Activated T-helper 1 cell treated with anti-CD3 and anti-CD28 coated beads, Interleukin-12 subunit alpha, Interleukin-12 subunit beta, Interleukin-2, Interleukin-4 antibody, amounts not matched to agents 30 ng/mL and 10 ng/mL and 1 ng/mL, durations not matched to agents 14 hours and 24 hours and 36 hours (primary cell): ENCODE measurements at regions of chr1 and their contacts with region 1.

Region 1: DNA sequence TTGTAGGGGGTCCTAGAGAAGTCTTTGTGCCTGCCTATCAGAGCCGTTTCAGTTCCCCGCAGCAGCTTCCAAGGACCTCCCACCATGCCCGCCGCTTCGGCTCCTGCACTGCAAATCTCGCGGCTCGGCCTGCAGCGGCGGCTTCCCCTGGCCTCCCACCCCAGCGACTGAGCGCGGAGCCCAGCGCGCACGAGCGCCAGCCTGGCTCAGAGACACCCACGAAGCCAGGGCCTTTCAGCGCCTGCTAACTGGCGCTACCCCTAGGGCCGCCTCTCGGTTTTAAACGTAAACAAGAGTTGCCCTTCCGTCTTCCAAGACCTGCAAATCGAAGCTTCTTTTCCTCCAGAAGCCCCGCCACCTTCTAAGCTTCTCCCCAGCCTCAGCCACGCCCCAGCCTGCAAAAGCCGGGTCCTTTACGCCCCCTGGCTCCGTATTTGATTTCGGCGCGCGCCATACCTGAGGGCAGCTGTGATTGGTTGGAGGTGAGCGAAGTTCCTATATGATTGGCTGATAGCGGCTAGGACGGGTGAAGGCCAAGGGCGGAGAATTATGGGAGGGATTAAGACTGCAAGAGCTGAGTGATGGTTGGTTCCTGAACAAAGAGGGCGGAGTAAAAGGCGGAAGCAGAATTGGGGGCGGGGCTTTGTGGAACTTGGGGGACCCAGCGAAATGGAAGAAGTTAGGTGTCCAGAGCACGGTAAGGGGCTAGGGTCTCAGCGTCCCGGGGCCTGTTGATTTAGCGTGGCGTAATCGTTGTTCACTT is at the start of gene TTF2:
- DNase-seq: peak; percentile 97
- H3K4me3 Mint-ChIP-seq: no peak within 1 kb of the TSS
- H3K27ac Mint-ChIP-seq: no peak within 1 kb of the TSS
- H3K4me1 Mint-ChIP-seq: peaks cover 46% of the 10 kb centered on the region
- H3K27me3 Mint-ChIP-seq: no peaks in the 10 kb centered on the region
- total RNA-seq, gene TTF2: 103 and 114 TPM in 2 replicates

Region 2: GRCh38 chr1:116372587-116373444 is 687.0 kb before region 1 on chr1 and contains the start of gene ATP1A1:
- intact Hi-C with region 1: loop called (anchors 1 kb)
- DNase-seq: peak; percentile 95
- H3K4me3 Mint-ChIP-seq: peak within 1 kb of the TSS; percentile 95
- H3K27ac Mint-ChIP-seq: peak within 1 kb of the TSS; percentile 90
- H3K4me1 Mint-ChIP-seq: peaks cover 38% of the 10 kb centered on the region
- H3K27me3 Mint-ChIP-seq: peaks cover 12% of the 10 kb centered on the region
- total RNA-seq, gene ATP1A1: 238 and 240 TPM in 2 replicates

Region 3: DNA sequence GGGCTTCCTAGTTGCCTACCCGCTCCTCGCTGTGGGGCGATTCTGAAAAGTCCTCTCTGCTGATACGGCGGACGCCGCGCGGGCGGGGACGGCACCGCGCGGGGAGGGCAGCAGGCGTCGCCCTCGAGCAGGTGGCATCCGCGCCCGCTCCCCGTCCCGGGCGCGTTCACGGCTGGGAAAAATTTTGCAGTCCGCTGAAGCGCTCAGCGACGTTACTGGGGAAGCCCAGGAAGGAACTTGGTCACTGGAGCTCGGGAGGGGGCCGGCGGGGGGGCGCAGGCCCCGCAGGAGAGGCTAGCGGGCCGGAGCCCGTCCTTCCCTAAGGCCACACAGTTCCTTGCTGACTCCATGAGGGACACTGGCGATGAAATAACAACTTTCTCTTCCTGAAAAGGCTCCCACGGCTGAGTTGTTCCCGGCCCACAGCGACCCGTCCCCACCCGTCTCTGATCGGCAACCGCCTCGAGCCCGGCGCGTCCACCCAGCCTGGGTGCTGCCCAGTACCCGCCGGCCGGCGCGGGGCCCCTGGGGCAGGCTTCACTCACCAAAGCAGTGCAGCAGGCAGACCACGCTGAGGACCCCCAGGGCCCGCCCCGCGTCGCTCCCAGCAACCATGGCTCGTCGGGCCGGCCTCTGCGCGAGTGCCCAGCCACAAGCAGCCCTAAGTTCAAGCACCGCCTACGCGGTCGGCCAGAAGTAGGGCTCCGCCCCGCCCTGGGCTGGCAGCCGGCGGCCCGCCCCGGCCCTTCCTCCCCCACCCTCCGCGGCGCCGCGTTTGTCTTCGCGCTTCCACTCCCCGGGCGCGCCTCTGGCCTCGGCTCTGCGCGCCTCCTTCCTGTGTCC is 489.3 kb before region 1 on chr1 and contains the start of gene CD58:
- intact Hi-C with region 1: loop called (anchors 1 kb)
- DNase-seq: peak; percentile 81
- H3K4me3 Mint-ChIP-seq: peak within 1 kb of the TSS; percentile 90
- H3K27ac Mint-ChIP-seq: peak within 1 kb of the TSS; percentile 90
- H3K4me1 Mint-ChIP-seq: peaks cover 74% of the 10 kb centered on the region
- H3K27me3 Mint-ChIP-seq: no peaks in the 10 kb centered on the region
- total RNA-seq, gene CD58: 35.3 and 37.8 TPM in 2 replicates

Region 4: GRCh38 chr1:116763787-116764465 is 295.9 kb before region 1 on chr1:
- intact Hi-C with region 1: loop called (anchors 1 kb)
- DNase-seq: peak; percentile 50
- H3K4me3 Mint-ChIP-seq: peak overlapping the region; percentile 84
- H3K27ac Mint-ChIP-seq: peak overlapping the region; percentile 100
- H3K4me1 Mint-ChIP-seq: peaks cover 95% of the 10 kb centered on the region
- H3K27me3 Mint-ChIP-seq: peaks cover 3% of the 10 kb centered on the region

Region 5: GRCh38 chr1:116847688-116848531 is 211.9 kb before region 1 on chr1:
- intact Hi-C with region 1: no loop called
- DNase-seq: no peak
- H3K4me3 Mint-ChIP-seq: no peak overlapping the region
- H3K27ac Mint-ChIP-seq: peak overlapping the region; percentile 38
- H3K4me1 Mint-ChIP-seq: peaks cover 34% of the 10 kb centered on the region
- H3K27me3 Mint-ChIP-seq: no peaks in the 10 kb centered on the region

Region 6: GRCh38 chr1:116899529-116899928 is 160.3 kb before region 1 on chr1:
- intact Hi-C with region 1: no loop called
- DNase-seq: no peak
- H3K4me3 Mint-ChIP-seq: no peak overlapping the region
- H3K27ac Mint-ChIP-seq: no peak overlapping the region
- H3K4me1 Mint-ChIP-seq: no peaks in the 10 kb centered on the region
- H3K27me3 Mint-ChIP-seq: peaks cover 2% of the 10 kb centered on the region

Region 7: DNA sequence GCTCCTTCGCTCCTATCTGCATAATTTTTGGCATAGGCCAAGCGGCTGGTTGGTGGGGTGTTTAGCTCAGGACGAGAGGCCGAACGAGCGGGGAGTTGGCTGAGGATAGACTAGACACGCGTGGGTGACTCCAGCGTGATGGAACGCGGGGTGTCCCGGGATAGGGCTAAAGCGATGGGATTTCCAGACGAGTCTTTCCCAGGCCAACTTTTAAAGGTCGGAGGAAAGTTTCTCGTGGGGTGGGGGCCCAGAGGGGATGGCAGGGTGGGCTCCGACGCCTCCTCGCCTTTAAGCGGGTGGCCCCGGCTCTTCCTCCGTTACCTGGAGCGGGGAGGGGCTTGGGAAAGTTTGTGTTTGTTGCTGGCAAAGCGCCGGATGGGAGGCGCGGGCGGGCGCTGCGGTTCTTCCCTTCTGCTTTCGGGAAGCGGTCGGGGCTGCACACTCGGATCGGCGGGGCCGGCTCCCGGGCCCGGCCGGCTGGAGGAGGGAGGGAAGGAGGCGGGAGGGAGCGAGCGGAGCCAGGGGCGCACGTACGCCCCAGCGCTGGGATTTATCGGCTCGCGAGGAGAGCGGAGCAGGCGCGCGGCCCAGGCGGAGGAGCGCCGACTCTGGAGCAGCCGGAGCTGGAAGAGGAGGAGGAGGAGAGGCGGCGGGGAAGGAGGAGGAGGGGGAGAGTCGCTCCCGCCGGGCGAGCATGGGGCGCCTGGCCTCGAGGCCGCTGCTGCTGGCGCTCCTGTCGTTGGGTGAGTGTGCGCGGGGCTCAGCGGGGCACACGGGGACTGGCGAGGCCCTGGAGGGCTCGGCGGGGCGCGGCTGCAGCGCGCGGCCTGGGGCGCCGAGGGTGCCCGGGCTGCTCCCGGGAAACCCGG is 150.1 kb before region 1 on chr1 and contains the start of gene PTGFRN:
- intact Hi-C with region 1: loop called (anchors 2 kb)
- DNase-seq: no peak
- H3K4me3 Mint-ChIP-seq: peak within 1 kb of the TSS; percentile 87
- H3K27ac Mint-ChIP-seq: peak within 1 kb of the TSS; percentile 75
- H3K4me1 Mint-ChIP-seq: peaks cover 9% of the 10 kb centered on the region
- H3K27me3 Mint-ChIP-seq: peaks cover 4% of the 10 kb centered on the region
- total RNA-seq, gene PTGFRN: 38.0 and 43.4 TPM in 2 replicates

Region 8: DNA sequence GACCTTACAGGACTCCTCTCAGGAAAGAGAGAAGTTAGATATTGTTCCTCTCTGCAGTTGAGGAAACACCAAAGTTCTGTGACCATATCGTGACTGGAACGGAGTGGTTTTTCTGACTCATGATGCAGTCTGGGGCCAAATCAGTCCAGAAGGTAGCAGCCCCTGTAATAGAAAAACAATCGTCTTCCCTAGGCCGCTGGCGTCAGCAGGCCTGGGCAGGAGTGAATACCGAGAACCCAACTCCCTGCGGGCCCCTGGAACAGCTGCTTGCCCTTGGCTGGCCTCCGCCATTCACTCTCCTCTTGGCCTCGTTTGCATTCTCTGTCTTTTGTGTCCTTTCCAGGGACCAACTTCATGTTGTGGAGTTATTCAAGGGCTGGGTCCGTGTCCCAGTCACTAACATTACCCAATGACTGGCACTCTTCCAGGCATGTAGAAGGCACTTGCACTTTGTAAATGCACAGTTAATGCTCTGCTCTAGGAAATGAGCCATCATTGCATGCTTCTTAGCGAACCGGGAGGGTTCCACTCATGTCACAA is 69.2 kb before region 1 on chr1:
- intact Hi-C with region 1: no loop called
- DNase-seq: no peak
- H3K4me3 Mint-ChIP-seq: no peak overlapping the region
- H3K27ac Mint-ChIP-seq: no peak overlapping the region
- H3K4me1 Mint-ChIP-seq: peaks cover 35% of the 10 kb centered on the region
- H3K27me3 Mint-ChIP-seq: peaks cover 5% of the 10 kb centered on the region

Region 9: DNA sequence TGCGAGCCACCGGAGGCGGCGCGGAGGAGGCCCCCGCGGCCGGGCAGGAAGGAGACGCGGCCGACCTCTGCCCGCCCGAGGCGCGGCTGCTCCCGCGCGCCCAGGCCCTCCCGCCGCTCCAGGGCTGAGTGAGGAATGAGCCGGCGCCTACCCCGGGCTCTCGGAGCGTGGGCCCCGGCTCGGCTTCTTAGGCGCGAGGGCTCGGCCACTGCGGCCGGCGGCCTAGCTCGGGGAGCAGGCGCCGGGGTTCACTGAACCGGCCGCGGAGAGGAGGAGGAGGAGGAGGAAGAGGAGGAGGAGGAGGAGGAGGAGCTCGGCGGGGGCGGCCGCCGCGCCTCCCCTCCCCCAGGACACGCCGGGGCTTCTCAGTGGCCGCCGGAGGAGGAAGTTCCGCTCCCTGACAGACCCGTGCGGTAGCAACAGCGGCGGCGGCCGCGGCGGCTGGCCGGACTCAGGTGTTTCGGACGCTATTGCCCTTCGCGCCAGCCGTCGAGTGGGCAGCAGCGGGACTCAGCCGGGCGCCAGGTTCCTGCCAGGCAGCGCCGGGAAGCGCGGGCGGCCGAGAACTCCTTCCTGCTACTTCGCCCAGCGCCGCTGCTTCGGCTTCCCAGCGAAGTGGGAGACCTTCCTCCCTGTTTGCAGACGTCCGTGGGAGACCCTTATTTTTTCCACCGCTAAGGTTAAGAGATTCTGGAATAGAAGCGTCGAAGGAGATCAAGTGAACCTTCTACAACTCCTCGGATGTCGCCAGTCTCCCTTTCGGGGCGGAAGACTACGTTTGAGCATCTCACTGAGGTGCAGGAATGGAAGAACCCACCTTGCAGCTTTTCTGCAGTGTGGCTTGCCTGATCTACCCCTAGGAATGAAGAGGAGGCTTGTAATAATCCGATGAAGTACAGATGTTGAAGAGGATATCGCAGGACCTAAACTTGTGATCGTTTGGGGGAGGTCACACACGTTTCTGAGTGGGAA is 307.5 kb after region 1 on chr1 and contains the start of gene MAN1A2:
- intact Hi-C with region 1: loop called (anchors 2 kb)
- DNase-seq: peak; percentile 74
- H3K4me3 Mint-ChIP-seq: peak within 1 kb of the TSS; percentile 97
- H3K27ac Mint-ChIP-seq: peak within 1 kb of the TSS; percentile 88
- H3K4me1 Mint-ChIP-seq: peaks cover 60% of the 10 kb centered on the region
- H3K27me3 Mint-ChIP-seq: no peaks in the 10 kb centered on the region
- total RNA-seq, gene MAN1A2: 30.1 and 32.5 TPM in 2 replicates

Region 10: GRCh38 chr1:117929173-117929989 is 869.5 kb after region 1 on chr1 and contains the starts of genes GDAP2 and WDR3:
- intact Hi-C with region 1: loop called (anchors 1 kb)
- DNase-seq: peak; percentile 96
- H3K4me3 Mint-ChIP-seq: peak within 1 kb of the TSS; percentile 96
- H3K27ac Mint-ChIP-seq: peak within 1 kb of the TSS; percentile 89
- H3K4me1 Mint-ChIP-seq: peaks cover 46% of the 10 kb centered on the region
- H3K27me3 Mint-ChIP-seq: no peaks in the 10 kb centered on the region
- total RNA-seq, gene GDAP2: 21.4 and 29.0 TPM in 2 replicates
- total RNA-seq, gene WDR3: 68.3 and 72.8 TPM in 2 replicates